ENCODE measurements at regions of chr7 and their contacts with region 1.

Region 1: DNA sequence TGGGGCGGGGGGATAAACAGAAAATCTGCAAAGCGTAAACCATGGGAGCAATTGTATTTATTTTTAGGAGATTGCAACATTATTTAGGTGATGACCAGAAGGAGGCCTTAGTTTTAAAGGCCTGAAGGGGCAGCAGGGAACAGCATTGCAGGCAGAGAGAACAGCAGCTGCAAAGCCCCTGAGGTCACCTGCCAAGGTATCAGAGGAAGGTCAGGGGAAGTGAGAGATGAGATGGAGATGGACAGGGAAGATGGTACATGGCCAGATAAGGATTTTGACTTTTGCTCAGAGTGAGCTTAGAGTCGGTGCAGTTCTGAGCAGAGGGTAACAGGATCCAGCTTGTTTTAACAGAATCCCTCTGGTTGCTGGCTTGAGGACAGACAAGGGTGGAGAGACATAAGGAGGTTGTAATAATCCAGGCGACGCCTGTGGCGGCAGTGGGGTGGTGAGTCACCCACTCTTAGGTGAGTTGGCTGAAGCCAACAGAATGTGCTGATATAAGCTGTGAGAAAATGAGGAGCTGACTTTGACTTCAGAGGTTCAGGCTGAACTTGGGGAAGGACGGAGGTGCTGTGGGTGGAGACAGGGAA is 82.3 kb upstream of the GTF2I start:
- DNase-seq: no peak
- H3K4me3 ChIP-seq: no peak overlapping the region
- H3K27ac ChIP-seq: no peak overlapping the region
- H3K4me1 ChIP-seq: peaks cover 0 to 6% of the 10 kb centered on the region in 2 donors
- H3K27me3 ChIP-seq: no peaks in the 10 kb centered on the region
- CTCF ChIP-seq: no peak

Region 2: DNA sequence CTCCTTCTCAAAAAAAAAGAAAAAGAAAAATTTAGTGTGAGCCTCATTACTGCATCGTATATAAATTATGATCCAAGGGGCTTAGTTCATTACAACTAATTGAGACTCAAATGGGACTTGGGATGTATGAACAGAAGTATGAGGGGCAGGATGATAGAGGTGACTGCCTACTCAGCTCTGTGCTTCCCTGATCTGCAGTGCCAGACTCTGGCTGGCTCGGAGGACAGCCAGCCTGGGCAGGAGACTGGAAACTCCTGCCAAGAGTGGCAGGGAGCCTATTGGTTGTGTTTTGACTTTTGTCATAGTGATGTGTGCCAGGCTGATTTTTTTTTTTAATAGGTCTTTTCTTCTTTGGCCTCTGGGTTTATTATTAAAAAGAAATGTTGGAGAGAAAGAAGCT is 195.3 kb before region 1 on chr7:
- intact Hi-C with region 1: no loop called
- DNase-seq: peak in 1 of 2 donors; percentile 77
- H3K4me3 ChIP-seq: no peak overlapping the region
- H3K27ac ChIP-seq: peak overlapping the region; percentile 45 to 68
- H3K4me1 ChIP-seq: no peaks in the 10 kb centered on the region
- H3K27me3 ChIP-seq: no peaks in the 10 kb centered on the region
- CTCF ChIP-seq: no peak

Region 3: GRCh38 chr7:74554178-74554577 is 21.1 kb before region 1 on chr7:
- intact Hi-C with region 1: no loop called
- DNase-seq: no peak
- H3K4me3 ChIP-seq: no peak overlapping the region
- H3K27ac ChIP-seq: no peak overlapping the region
- H3K4me1 ChIP-seq: no peaks in the 10 kb centered on the region
- H3K27me3 ChIP-seq: no peaks in the 10 kb centered on the region
- CTCF ChIP-seq: no peak

Region 4: DNA sequence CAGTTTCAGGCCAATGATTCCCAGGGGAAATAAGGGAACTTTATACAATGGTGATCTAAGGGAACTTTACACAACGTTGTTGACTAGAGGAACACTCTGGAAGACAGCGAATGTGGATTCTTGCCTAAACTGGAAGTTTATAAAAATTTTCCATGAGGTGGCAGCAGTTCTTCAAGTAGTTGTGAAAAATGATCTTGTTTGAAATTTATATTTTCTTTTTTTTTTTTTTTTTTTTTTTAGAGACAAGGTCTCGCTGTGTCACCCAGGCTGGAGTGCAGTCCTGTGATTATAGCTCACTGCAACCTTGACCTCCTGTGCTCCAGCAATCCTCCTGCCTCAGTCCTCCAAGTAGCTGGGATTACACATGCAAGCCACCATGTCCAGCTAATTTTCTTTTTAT is 50.2 kb after region 1 on chr7:
- intact Hi-C with region 1: loop called (anchors 10 kb)
- DNase-seq: no peak
- H3K4me3 ChIP-seq: no peak overlapping the region
- H3K27ac ChIP-seq: no peak overlapping the region
- H3K4me1 ChIP-seq: peaks cover 0 to 3% of the 10 kb centered on the region in 2 donors
- H3K27me3 ChIP-seq: no peaks in the 10 kb centered on the region
- CTCF ChIP-seq: peak in 2 of 3 experiments; percentile 11 to 18